Mammary epithelial cell (primary cell): ENCODE measurements at regions of chr14 and their contacts with region 1.

Region 1: GRCh38 chr14:23186913-23187654 is 3.6 kb upstream of the SLC7A8 start:
- DNase-seq: peak; percentile 44
- H3K4me3 ChIP-seq: no peak overlapping the region
- H3K27ac ChIP-seq: no peak overlapping the region
- H3K4me1 ChIP-seq: peaks cover 8% of the 10 kb centered on the region
- H3K27me3 ChIP-seq: no peaks in the 10 kb centered on the region
- CTCF ChIP-seq: peak; percentile 85 to 86

Region 2: GRCh38 chr14:23068476-23069412 is 118.3 kb before region 1 on chr14:
- CTCF ChIA-PET with region 1: no interaction called
- dilution Hi-C with region 1: no loop called
- in situ Hi-C with region 1: no loop called
- intact Hi-C with region 1: loop called (anchors 2 kb)
- DNase-seq: peak; percentile 83
- H3K4me3 ChIP-seq: no peak overlapping the region
- H3K27ac ChIP-seq: no peak overlapping the region
- H3K4me1 ChIP-seq: peaks cover 10% of the 10 kb centered on the region
- H3K27me3 ChIP-seq: no peaks in the 10 kb centered on the region
- CTCF ChIP-seq: peak; percentile 100

Region 3: GRCh38 chr14:23120541-23121251 is 66.4 kb before region 1 on chr14:
- CTCF ChIA-PET with region 1: interaction called, 28 read pairs
- dilution Hi-C with region 1: loop called (anchors 5 kb)
- in situ Hi-C with region 1: loop called (anchors 5 kb)
- intact Hi-C with region 1: loop called (anchors 1 kb)
- DNase-seq: peak; percentile 63
- H3K4me3 ChIP-seq: no peak overlapping the region
- H3K27ac ChIP-seq: no peak overlapping the region
- H3K4me1 ChIP-seq: peaks cover 4% of the 10 kb centered on the region
- H3K27me3 ChIP-seq: no peaks in the 10 kb centered on the region
- CTCF ChIP-seq: peak; percentile 100

Region 4: DNA sequence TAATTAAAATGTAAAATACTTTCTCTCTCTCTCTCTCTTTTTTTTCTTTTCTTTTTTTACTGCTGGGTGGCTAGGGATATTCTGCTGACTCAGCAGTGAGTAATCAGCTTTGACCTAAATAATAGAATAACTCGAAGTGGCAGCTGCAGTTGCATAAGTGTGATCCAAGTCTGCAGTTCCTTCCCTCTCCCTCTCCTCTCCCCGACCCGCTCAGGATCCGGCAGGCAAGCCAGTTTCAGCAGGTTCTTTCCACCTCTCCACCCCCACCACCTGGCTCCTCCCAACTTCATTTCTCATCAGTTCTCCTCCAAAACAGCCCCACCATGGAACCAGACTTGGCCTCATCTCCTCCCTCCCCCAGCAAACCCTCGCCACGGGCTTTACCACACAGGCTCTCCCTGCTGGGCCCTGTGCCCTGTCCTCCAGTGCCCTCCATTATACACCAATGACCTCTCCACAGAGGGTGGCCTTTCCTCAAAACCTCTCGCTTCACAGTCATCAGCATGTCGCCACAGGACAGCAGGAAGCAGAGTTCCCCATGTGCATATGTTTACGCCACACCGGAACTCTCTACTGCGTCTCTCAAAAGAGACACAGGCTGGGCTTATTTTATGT is 26.1 kb before region 1 on chr14:
- CTCF ChIA-PET with region 1: no interaction called
- dilution Hi-C with region 1: no loop called
- in situ Hi-C with region 1: no loop called
- intact Hi-C with region 1: loop called (anchors 2 kb)
- DNase-seq: peak; percentile 84
- H3K4me3 ChIP-seq: no peak overlapping the region
- H3K27ac ChIP-seq: no peak overlapping the region
- H3K4me1 ChIP-seq: peaks cover 9% of the 10 kb centered on the region
- H3K27me3 ChIP-seq: no peaks in the 10 kb centered on the region
- CTCF ChIP-seq: no peak

Region 5: GRCh38 chr14:23301288-23301968 is 114.3 kb after region 1 on chr14:
- CTCF ChIA-PET with region 1: interaction called, 4 read pairs
- dilution Hi-C with region 1: no loop called
- in situ Hi-C with region 1: no loop called
- intact Hi-C with region 1: loop called (anchors 2 kb)
- DNase-seq: peak; percentile 99
- H3K4me3 ChIP-seq: peak overlapping the region; percentile 61 to 76 (median 73)
- H3K27ac ChIP-seq: peak overlapping the region; percentile 79
- H3K4me1 ChIP-seq: peaks cover 41% of the 10 kb centered on the region
- H3K27me3 ChIP-seq: no peaks in the 10 kb centered on the region
- CTCF ChIP-seq: peak; percentile 38 to 74